CD4-positive, alpha-beta T cell (primary cell): ENCODE measurements at regions of chr2 and their contacts with region 1.

Region 1: DNA sequence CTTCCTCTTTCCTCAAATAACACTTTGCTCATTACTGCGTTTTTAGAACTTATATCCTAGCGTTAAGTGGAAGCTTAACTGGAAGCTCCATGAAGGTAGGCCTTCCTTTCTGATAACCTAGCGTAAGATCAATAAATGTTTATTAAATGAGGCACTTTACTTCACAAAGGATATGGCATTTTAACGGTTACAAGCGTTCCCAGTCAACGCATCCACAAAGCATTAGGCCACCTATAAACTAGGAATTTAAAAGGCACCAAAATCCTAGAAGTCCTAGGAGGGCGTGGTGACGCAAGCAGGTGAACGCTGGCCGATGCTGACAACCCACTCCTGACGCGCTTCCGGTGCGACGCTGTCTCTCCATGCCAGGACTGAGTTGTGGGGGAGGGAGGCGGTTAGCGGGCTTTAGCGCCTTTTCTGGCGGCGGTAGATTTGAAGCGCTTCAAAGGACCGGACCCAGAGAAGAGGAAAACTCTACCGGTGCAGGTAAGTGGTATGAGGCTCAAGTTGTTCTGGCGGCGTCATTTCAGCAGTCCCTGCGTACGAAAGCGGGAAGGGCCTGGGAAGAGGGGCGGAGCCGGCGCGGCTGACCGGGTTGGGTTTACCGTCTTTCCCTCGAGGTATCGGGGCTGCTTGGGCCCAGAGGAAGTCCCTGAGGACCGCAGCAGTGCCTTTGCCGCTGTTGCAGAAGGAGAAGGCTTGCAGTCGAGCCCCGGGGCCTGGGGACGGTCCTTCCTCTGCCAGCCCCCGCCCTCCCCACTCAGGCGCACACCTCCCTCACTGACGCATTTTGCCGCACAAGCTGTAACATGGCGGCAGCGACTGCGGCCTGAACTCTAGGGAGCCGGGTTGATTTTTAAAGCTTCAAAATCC is at the start of gene PPIG:
- DNase-seq: peak; percentile 73 to 96 (median 82)
- ATAC-seq: peak; percentile 92
- H3K4me3 ChIP-seq: peak within 1 kb of the TSS; percentile 81
- H3K4me3 Mint-ChIP-seq: peak within 1 kb of the TSS; percentile 98
- H3K27ac ChIP-seq: peak within 1 kb of the TSS; percentile 97 to 99
- H3K27ac Mint-ChIP-seq: peak within 1 kb of the TSS; percentile 99
- H3K4me1 ChIP-seq: peaks cover 24% of the 10 kb centered on the region
- H3K4me1 Mint-ChIP-seq: peaks cover 39% of the 10 kb centered on the region
- H3K27me3 ChIP-seq: no peaks in the 10 kb centered on the region
- H3K27me3 Mint-ChIP-seq: no peaks in the 10 kb centered on the region
- CTCF ChIP-seq: no peak
- total RNA-seq, gene PPIG: 83.4 to 87.8 TPM

Region 2: GRCh38 chr2:169260246-169260645 is 324.0 kb before region 1 on chr2:
- CTCF ChIA-PET with region 1: no interaction called
- POLR2A ChIA-PET with region 1: no interaction called
- intact Hi-C with region 1: no loop called
- DNase-seq: no peak
- ATAC-seq: no peak
- H3K4me3 ChIP-seq: no peak overlapping the region
- H3K4me3 Mint-ChIP-seq: no peak overlapping the region
- H3K27ac ChIP-seq: no peak overlapping the region
- H3K27ac Mint-ChIP-seq: no peak overlapping the region
- H3K4me1 ChIP-seq: no peaks in the 10 kb centered on the region
- H3K4me1 Mint-ChIP-seq: no peaks in the 10 kb centered on the region
- H3K27me3 ChIP-seq: peaks cover 0 to 5% of the 10 kb centered on the region in 2 experiments
- H3K27me3 Mint-ChIP-seq: peaks cover 10% of the 10 kb centered on the region
- CTCF ChIP-seq: no peak

Region 3: GRCh38 chr2:169546756-169547155 is 37.5 kb before region 1 on chr2:
- CTCF ChIA-PET with region 1: no interaction called
- POLR2A ChIA-PET with region 1: no interaction called
- intact Hi-C with region 1: no loop called
- DNase-seq: no peak
- ATAC-seq: no peak
- H3K4me3 ChIP-seq: no peak overlapping the region
- H3K4me3 Mint-ChIP-seq: no peak overlapping the region
- H3K27ac ChIP-seq: no peak overlapping the region
- H3K27ac Mint-ChIP-seq: no peak overlapping the region
- H3K4me1 ChIP-seq: no peaks in the 10 kb centered on the region
- H3K4me1 Mint-ChIP-seq: no peaks in the 10 kb centered on the region
- H3K27me3 ChIP-seq: no peaks in the 10 kb centered on the region
- H3K27me3 Mint-ChIP-seq: no peaks in the 10 kb centered on the region
- CTCF ChIP-seq: no peak

Region 4: DNA sequence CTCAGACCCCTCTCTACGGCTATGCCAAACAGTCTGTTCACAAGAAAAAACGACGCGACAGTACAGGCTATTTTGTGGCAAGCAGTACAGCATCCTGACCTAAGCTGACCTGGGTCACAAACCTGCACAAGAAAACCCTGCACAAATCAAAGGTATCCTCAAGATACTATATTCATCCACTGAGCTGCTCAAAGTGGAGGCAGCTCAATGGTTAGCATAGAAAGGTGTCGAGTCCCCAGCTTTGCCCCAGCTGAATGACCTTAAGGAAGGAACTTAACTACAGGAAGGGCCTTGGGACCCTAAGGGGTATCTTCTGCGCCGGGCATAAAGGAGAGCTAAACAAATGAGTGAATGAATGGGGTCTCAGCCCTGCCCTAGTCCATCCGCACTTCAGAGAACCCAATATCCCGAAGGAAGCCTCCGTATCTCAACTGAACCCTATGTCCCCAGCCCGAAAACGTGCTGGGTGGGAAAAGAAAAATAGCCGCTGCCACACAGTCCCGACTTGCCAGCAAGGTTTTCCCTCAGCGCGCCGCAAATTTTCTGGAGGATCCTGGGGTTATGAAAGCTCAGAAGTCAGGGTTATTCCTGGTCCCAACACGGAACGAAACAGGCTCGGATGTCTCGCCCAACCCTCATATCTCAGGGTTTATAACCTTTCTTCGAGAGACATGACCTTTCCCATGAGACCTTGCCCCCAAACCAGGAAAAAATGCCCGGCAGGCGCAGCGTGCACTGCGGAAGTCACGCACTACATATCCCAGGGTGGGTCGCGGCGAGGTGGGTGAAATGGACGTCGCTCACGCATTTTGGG is 10.9 kb before region 1 on chr2 and contains the start of gene FASTKD1:
- CTCF ChIA-PET with region 1: interaction called, 4 read pairs
- POLR2A ChIA-PET with region 1: interaction called, 49 read pairs
- intact Hi-C with region 1: loop called (anchors 1 kb)
- DNase-seq: peak; percentile 67 to 94 (median 80)
- ATAC-seq: peak; percentile 100
- H3K4me3 ChIP-seq: peak within 1 kb of the TSS; percentile 98
- H3K4me3 Mint-ChIP-seq: peak within 1 kb of the TSS; percentile 99
- H3K27ac ChIP-seq: peak within 1 kb of the TSS; percentile 1 to 68
- H3K27ac Mint-ChIP-seq: peak within 1 kb of the TSS; percentile 79
- H3K4me1 ChIP-seq: peaks cover 6% of the 10 kb centered on the region
- H3K4me1 Mint-ChIP-seq: peaks cover 25% of the 10 kb centered on the region
- H3K27me3 ChIP-seq: no peaks in the 10 kb centered on the region
- H3K27me3 Mint-ChIP-seq: peaks cover 4% of the 10 kb centered on the region
- CTCF ChIP-seq: no peak
- total RNA-seq, gene FASTKD1: 6.3 to 7.2 TPM

Region 5: DNA sequence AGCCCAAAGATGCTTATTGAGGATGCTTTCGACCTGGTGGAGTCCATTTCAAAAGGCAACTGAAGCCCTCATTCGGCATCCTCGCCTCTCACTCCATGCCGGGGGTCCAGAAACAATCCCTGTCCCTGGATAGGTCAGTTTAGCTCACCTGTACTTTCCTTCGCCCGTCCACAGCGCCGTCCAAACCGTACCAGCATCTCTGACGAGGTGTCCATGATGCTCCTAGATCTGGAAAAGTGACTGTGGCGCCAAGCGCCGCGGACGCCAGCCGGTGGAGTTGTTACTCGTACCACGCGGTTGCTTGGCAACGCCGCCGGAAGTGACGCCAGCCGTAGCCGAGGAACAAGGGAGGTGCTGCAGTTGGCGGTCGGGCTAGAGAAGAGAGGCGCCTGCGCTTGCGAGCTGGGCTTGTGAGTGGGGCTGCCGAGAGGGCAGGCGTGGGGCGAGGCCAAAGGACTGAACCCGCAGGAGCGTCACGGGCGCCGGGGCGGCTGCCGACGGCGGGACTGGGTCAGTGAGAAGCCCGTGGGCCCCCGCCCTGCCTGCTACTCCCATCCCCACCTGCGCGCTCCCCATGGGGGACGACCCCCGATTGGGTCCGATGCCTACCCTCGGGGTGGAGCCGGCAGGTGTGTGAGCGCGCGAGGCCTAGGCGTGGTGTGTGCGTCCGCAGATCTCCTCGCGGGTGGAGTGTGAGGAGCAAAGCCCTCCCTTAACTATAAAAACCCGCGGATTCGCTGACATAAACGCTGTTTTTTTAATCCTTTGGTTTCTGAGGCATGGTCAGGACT is 110.1 kb after region 1 on chr2 and contains the starts of genes CFAP210 and PHOSPHO2:
- CTCF ChIA-PET with region 1: no interaction called
- POLR2A ChIA-PET with region 1: interaction called, 5 read pairs
- intact Hi-C with region 1: loop called (anchors 2 to 5 kb)
- DNase-seq: peak; percentile 97 to 99 (median 99)
- ATAC-seq: peak; percentile 91
- H3K4me3 ChIP-seq: peak within 1 kb of the TSS; percentile 70
- H3K4me3 Mint-ChIP-seq: peak within 1 kb of the TSS; percentile 91
- H3K27ac ChIP-seq: peak within 1 kb of the TSS; percentile 80 to 91
- H3K27ac Mint-ChIP-seq: peak within 1 kb of the TSS; percentile 95
- H3K4me1 ChIP-seq: peaks cover 18% of the 10 kb centered on the region
- H3K4me1 Mint-ChIP-seq: peaks cover 18% of the 10 kb centered on the region
- H3K27me3 ChIP-seq: peaks cover 0 to 5% of the 10 kb centered on the region in 2 experiments
- H3K27me3 Mint-ChIP-seq: no peaks in the 10 kb centered on the region
- CTCF ChIP-seq: no peak
- total RNA-seq, gene CFAP210: 2.2 to 3.1 TPM
- total RNA-seq, gene PHOSPHO2: 4.5 to 6.5 TPM